MCF 10A (cell line): ENCODE measurements at regions of chr2 and their contacts with region 1.

Region 1: DNA sequence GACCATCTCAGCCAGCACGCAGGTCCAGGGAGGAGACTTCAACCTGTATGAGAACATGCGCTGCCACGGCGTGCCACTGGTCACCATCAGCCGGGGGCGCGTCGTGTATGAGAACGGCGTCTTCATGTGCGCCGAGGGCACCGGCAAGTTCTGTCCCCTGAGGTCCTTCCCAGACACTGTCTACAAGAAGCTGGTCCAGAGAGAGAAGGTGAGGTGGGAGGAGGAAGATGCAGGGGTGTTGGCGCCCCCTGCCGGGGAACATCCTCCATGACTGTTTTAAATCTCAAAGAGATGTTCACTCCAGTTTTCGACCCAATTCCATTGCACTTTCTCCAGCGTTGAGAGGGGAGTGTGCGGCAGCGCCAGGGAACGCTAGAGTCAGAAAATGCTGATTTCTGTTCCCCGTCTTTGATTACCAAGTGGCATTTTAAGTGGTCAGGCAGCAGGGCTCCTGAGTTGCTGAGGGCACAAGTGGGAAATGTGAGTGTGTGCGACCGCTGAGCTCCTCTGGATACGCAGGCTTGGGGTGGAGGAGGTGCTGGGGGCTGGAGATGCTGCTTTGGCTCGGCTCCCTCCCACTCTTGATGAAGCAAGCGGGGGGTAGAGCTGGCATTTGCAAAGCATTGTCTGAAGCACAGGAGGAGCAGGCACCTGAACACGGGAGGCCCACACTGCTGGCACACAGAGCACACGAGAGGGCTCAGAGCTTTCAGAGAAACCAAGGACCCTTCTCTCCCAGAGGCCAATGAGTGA is 27.7 kb upstream of the MAPRE3 start:
- DNase-seq: peak; percentile 63
- H3K4me3 Mint-ChIP-seq: no peak overlapping the region
- H3K27ac Mint-ChIP-seq: no peak overlapping the region
- H3K4me1 Mint-ChIP-seq: peaks cover 7% of the 10 kb centered on the region
- H3K27me3 Mint-ChIP-seq: peaks cover 32% of the 10 kb centered on the region
- CTCF ChIP-seq: peak; percentile 68

Region 2: GRCh38 chr2:26670171-26670570 is 272.5 kb before region 1 on chr2:
- CTCF ChIA-PET with region 1: no interaction called
- POLR2A ChIA-PET with region 1: no interaction called
- intact Hi-C with region 1: no loop called
- DNase-seq: peak; percentile 38
- H3K4me3 Mint-ChIP-seq: no peak overlapping the region
- H3K27ac Mint-ChIP-seq: no peak overlapping the region
- H3K4me1 Mint-ChIP-seq: no peaks in the 10 kb centered on the region
- H3K27me3 Mint-ChIP-seq: peaks cover 76% of the 10 kb centered on the region
- CTCF ChIP-seq: no peak

Region 3: DNA sequence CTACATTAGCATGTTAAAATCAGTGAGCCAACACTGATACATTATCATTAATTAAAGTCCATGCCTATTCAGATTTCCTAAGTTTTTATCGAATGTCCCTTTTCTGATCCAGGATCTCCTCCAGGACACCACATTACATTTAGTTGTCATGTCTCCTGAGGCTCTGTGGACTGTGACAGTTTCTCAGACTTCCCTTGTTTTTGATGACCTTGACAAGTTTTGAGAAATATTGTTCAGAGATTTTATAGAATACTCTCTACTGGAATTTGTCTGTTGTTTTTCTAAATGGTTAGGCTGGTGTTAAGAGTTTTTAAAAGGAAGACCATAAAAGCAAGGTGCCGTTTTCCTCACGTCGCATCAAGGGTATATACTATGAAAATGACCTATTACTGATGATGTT is 11.4 kb after region 1 on chr2:
- CTCF ChIA-PET with region 1: interaction called, 12 read pairs
- POLR2A ChIA-PET with region 1: no interaction called
- intact Hi-C with region 1: no loop called
- DNase-seq: no peak
- H3K4me3 Mint-ChIP-seq: no peak overlapping the region
- H3K27ac Mint-ChIP-seq: no peak overlapping the region
- H3K4me1 Mint-ChIP-seq: no peaks in the 10 kb centered on the region
- H3K27me3 Mint-ChIP-seq: peaks cover 85% of the 10 kb centered on the region
- CTCF ChIP-seq: no peak